Activated naive CD4-positive, alpha-beta T cell treated with anti-CD3 and anti-CD28 coated beads for 36 hours (primary cell): ENCODE measurements at regions of chr20 and their contacts with region 1.

Region 1: GRCh38 chr20:8131598-8132483 is at the start of gene PLCB1:
- DNase-seq: peak; percentile 78
- H3K4me3 Mint-ChIP-seq: peak within 1 kb of the TSS; percentile 67
- H3K27ac Mint-ChIP-seq: no peak within 1 kb of the TSS
- H3K4me1 Mint-ChIP-seq: peaks cover 12% of the 10 kb centered on the region
- H3K27me3 Mint-ChIP-seq: peaks cover 32% of the 10 kb centered on the region
- total RNA-seq, gene PLCB1: 1.2 TPM

Region 2: GRCh38 chr20:7980332-7981046 is 151.4 kb before region 1 on chr20:
- CTCF ChIA-PET with region 1: no interaction called
- intact Hi-C with region 1: no loop called
- DNase-seq: peak; percentile 6
- H3K4me3 Mint-ChIP-seq: no peak overlapping the region
- H3K27ac Mint-ChIP-seq: no peak overlapping the region
- H3K4me1 Mint-ChIP-seq: peaks cover 11% of the 10 kb centered on the region
- H3K27me3 Mint-ChIP-seq: no peaks in the 10 kb centered on the region

Region 3: DNA sequence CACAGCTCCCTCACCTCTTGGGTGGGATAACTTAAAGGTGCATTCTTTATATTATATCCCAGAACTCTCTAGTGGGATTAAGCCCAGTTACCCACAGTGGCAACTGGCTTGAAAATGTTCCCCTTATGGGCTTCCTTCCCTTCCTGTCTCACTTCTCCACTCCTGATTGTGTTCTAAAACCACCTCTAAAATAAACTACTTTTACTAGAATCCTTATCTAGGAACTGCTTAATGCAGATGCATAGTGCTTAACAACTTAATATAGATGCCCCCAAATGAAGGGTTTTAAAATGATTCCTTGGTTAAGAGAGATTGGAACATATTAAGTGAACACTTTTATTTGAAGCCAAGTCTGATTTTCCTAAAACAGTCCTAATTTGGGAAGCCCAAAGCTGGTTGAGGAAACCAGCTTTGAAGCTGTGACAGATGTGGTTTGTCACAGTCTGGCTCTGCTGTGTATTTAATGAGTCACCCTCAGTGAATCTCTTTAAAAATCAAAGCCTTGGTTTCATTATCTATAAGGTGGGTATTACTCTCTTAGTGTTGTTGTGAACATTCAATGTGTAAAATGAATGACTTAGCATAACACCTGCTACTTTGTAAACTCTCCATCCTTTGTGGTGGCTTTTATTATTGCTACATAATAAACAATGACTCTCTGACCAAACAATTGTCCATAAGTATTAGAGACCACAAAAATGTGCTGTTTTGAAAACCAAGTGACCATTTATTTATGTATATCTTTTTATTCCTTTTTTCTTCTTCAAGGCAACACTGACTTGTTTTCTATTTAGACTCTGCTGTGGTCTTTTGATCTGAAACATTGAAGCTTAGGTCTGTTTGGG is 24.6 kb after region 1 on chr20:
- CTCF ChIA-PET with region 1: no interaction called
- intact Hi-C with region 1: loop called (anchors 1 kb)
- DNase-seq: peak; percentile 29
- H3K4me3 Mint-ChIP-seq: no peak overlapping the region
- H3K27ac Mint-ChIP-seq: no peak overlapping the region
- H3K4me1 Mint-ChIP-seq: peaks cover 41% of the 10 kb centered on the region
- H3K27me3 Mint-ChIP-seq: peaks cover 9% of the 10 kb centered on the region

Region 4: DNA sequence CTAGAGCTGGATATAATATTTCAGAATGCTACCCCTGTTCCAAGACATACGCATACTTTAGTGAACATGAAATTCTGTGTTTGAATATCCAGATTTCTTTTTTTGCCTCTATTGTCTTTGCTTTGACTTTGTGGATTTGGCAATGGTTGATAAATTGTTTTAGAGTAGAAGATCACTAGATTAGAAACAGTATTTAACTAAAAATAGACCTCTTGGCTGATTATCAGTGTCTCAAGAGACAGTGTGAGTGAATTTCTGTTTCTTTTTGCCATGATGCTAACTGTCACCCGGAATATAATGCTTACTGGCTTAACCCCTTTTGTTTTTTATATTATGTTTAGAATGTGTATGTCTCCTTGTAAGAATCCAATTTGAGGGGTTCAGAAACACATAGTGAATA is 102.7 kb after region 1 on chr20:
- CTCF ChIA-PET with region 1: no interaction called
- intact Hi-C with region 1: no loop called
- DNase-seq: no peak
- H3K4me3 Mint-ChIP-seq: no peak overlapping the region
- H3K27ac Mint-ChIP-seq: no peak overlapping the region
- H3K4me1 Mint-ChIP-seq: no peaks in the 10 kb centered on the region
- H3K27me3 Mint-ChIP-seq: peaks cover 4% of the 10 kb centered on the region

Region 5: GRCh38 chr20:8305449-8305978 is 173.7 kb after region 1 on chr20:
- CTCF ChIA-PET with region 1: interaction called, 8 read pairs
- intact Hi-C with region 1: loop called (anchors 1 kb)
- DNase-seq: peak; percentile 83
- H3K4me3 Mint-ChIP-seq: no peak overlapping the region
- H3K27ac Mint-ChIP-seq: no peak overlapping the region
- H3K4me1 Mint-ChIP-seq: no peaks in the 10 kb centered on the region
- H3K27me3 Mint-ChIP-seq: peaks cover 2% of the 10 kb centered on the region

Region 6: GRCh38 chr20:8389381-8390036 is 257.7 kb after region 1 on chr20:
- CTCF ChIA-PET with region 1: interaction called, 5 read pairs
- intact Hi-C with region 1: loop called (anchors 1 kb)
- DNase-seq: no peak
- H3K4me3 Mint-ChIP-seq: no peak overlapping the region
- H3K27ac Mint-ChIP-seq: no peak overlapping the region
- H3K4me1 Mint-ChIP-seq: no peaks in the 10 kb centered on the region
- H3K27me3 Mint-ChIP-seq: peaks cover 2% of the 10 kb centered on the region

Region 7: GRCh38 chr20:8454137-8454712 is 322.4 kb after region 1 on chr20:
- CTCF ChIA-PET with region 1: no interaction called
- intact Hi-C with region 1: loop called (anchors 1 kb)
- DNase-seq: peak; percentile 12
- H3K4me3 Mint-ChIP-seq: no peak overlapping the region
- H3K27ac Mint-ChIP-seq: no peak overlapping the region
- H3K4me1 Mint-ChIP-seq: no peaks in the 10 kb centered on the region
- H3K27me3 Mint-ChIP-seq: no peaks in the 10 kb centered on the region

Region 8: DNA sequence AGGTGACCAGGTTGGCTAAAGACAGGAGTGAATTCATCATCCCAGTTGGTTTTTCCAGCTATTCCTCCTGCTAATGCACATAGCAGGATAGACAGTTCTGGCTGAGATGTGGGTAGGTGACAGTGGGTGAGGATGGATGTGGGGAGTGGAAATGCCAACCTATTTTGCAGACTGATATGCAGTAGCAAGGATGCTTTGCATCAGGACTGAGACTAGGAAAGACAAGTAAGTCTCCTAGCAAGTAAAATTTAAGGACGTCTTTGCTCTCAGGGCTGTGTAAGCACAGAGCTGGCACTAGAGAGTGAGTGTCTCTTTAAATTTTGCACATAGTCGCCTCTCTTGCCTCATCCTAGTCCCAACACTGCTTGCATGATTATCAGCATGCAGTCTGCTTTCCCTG is 568.9 kb after region 1 on chr20:
- CTCF ChIA-PET with region 1: no interaction called
- intact Hi-C with region 1: no loop called
- DNase-seq: no peak
- H3K4me3 Mint-ChIP-seq: no peak overlapping the region
- H3K27ac Mint-ChIP-seq: no peak overlapping the region
- H3K4me1 Mint-ChIP-seq: no peaks in the 10 kb centered on the region
- H3K27me3 Mint-ChIP-seq: peaks cover 4% of the 10 kb centered on the region